G401 (cell line): ENCODE measurements at regions of chr17 and their contacts with region 1.

Region 1: GRCh38 chr17:57927048-57927723 is 28.0 kb downstream of the CUEDC1 start:
- DNase-seq: no peak

Region 2: DNA sequence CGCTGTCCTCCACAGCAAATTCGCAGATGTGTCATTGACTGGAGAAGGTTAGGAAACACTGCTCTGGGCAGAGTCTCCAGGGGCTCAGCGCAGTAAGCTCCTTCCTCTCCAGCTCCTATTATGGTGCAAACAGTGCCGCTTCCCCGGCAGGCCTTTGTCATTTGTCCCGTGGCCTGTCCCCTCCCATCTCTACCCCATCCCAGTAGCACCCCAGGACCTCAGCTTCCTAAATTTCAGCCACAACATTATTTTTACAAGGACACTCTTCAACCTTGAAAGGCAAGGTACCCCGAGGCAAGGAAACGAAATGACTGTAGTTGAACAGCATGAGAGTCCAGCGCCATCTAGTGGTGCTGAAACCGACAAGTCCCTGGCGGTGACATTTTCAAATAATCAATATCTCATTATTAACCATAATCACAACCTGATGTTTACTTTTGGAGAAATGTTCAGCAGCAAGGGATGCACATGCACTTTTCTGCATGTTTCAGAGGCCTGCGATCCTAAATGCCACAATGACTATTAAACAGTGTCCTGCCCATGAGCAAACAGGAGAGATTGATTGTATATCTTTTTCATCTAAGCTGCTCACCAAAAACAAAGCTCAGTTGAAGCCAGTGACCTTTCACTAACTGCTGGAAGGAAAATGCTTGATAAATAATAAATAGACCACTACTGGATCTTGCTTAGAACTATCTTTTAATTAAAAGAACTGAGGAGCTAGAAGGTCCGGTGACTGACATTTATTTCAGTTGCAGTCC is 93.8 kb before region 1 on chr17:
- in situ Hi-C with region 1: no loop called
- DNase-seq: peak; percentile 80

Region 3: GRCh38 chr17:57855391-57856035 is 71.7 kb before region 1 on chr17:
- in situ Hi-C with region 1: loop called (anchors 5 kb)
- DNase-seq: no peak

Region 4: DNA sequence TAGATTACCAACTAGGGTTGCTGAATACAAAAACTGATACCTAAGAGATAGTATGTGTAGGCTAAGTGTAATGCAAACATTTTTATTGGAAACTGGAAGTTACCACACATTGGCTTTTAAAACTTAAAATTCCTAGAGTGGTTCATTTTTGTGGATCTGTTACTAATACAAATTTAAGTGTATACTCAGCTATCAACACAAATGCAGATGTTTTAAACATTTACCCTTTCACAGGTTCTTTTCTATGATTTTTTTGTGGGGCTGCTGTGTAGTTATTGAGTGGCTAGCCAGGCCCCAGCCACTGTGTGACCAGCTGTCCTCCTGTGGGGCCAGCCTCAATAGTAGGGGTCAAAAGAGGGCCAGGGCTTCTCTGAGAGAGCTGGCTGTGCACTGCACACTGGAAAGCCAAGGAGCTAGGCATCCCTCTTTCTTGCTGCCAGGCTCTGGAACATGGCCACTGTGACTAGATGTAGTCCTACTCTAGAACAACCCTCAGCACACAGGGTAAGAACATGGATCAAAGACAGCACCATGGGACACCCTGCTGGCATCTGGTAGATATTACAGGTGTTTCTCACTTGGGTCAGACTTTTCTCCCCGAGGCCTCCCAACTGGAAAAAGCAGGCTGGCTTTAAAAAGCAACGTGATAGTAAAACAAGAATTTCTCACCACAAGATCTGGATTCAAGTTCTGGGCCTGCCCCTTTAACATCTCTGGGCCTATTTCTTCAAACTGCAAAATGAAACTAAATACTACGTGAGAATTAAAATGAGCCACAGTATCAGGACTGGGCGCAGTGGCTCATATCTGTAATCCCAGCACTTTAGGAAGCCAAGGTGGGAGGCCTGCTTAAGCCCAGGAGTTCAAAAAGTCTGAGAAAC is 68.1 kb after region 1 on chr17:
- in situ Hi-C with region 1: loop called (anchors 10 kb)
- DNase-seq: peak; percentile 66

Region 5: GRCh38 chr17:58066401-58066800 is 139.2 kb after region 1 on chr17:
- in situ Hi-C with region 1: no loop called
- DNase-seq: no peak